ENCODE measurements at regions of chr3 and their contacts with region 1.

Region 1: GRCh38 chr3:101676765-101677435 is at the start of gene ZBTB11:
- DNase-seq: peak; percentile 100
- H3K4me3 ChIP-seq: peak within 1 kb of the TSS; percentile 93 to 95
- H3K27ac ChIP-seq: peak within 1 kb of the TSS; percentile 92 to 99
- H3K4me1 ChIP-seq: peaks cover 0 to 7% of the 10 kb centered on the region in 2 donors
- H3K27me3 ChIP-seq: no peaks in the 10 kb centered on the region
- CTCF ChIP-seq: peak; percentile 49 to 68 (median 58)
- POLR2A ChIP-seq: peak; percentile 83 to 92
- total RNA-seq, gene ZBTB11: 16.1 to 42.0 (median 25.7) TPM

Region 2: DNA sequence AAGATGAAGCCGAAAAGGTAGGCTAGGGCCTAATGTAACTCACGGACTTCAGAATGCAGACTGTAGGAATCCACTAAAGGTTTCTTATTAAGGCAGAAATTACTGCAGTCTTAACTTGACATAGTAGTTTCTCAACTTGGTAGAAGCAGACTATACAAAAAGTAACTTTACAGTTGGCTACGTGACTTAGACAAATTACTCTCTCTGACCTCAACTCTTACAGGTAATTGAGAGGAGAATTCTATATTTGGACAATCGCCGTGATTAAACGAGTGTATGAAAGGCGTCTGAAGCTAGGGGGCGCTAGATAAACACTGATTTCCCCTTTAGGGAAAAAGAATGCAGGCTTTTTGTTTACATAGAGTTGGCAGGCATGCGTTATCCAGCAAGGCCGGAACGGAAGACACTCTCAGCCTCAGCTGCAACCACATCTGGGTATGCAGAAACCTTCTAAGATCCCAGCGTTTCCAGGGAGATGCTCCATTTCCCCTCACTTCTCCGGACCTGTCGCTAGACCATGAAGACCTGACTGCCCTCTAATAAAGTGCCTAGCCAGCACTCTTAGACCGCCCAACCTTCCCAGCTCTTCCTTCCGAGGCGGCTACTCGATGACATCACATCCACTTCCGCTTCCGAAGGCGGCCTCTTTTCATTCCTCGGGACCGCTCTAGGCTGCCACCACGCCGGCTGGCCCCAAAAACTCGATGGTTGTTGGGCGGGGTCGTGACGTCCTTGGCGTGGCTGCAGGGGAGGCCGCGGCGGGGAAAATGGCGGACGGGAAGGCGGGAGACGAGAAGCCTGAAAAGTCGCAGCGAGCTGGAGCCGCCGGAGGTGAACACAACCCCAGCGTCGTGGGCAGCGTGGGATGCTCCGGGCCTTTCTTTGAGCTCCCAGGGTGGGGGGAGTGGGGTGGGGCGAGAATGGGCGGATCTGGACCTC is 103.2 kb before region 1 on chr3 and contains the start of gene PCNP:
- intact Hi-C with region 1: loop called (anchors 10 kb)
- DNase-seq: peak; percentile 99
- H3K4me3 ChIP-seq: peak within 1 kb of the TSS; percentile 95 to 97
- H3K27ac ChIP-seq: peak within 1 kb of the TSS; percentile 98 to 99
- H3K4me1 ChIP-seq: peaks cover 0 to 16% of the 10 kb centered on the region in 2 donors
- H3K27me3 ChIP-seq: no peaks in the 10 kb centered on the region
- CTCF ChIP-seq: peak; percentile 83 to 91 (median 88)
- POLR2A ChIP-seq: peak; percentile 62 to 77
- total RNA-seq, gene PCNP: 66.6 to 218 (median 203) TPM

Region 3: DNA sequence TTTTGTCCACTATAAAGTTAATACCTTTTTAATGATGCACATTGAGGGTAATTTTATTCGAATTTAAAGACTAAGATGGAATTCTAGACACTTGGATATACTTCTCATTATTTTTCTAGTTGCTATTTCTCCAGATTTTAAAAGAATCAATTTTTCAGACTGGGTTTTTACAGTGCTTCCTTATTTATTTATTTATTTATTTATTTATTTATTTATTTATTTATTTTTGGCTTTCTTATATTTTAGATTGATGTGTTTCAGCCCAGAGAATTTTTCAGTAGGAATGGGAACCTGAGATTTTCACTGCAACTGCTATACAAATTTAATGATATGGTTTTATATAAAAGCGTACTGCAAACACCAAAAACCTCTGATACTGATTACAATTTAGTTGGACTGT is 1206.6 kb after region 1 on chr3:
- intact Hi-C with region 1: no loop called
- DNase-seq: no peak
- H3K4me3 ChIP-seq: no peak overlapping the region
- H3K27ac ChIP-seq: no peak overlapping the region
- H3K4me1 ChIP-seq: no peaks in the 10 kb centered on the region
- H3K27me3 ChIP-seq: no peaks in the 10 kb centered on the region
- CTCF ChIP-seq: no peak
- POLR2A ChIP-seq: no peak

Measured in uterus (tissue), 4 donors.